Naive thymus-derived CD4-positive, alpha-beta T cell (primary cell): ENCODE measurements at regions of chr5 and their contacts with region 1.

Region 1: GRCh38 chr5:181223058-181223728 is at the start of gene TRIM41:
- DNase-seq: peak; percentile 89 to 98 (median 97)
- ATAC-seq: peak; percentile 81
- H3K4me3 ChIP-seq: peak within 1 kb of the TSS; percentile 90
- H3K4me3 Mint-ChIP-seq: peak within 1 kb of the TSS; percentile 89 to 100 (median 98)
- H3K27ac ChIP-seq: peak within 1 kb of the TSS; percentile 95
- H3K27ac Mint-ChIP-seq: peak within 1 kb of the TSS; percentile 98 to 100 (median 100)
- H3K4me1 ChIP-seq: peaks cover 20 to 22% of the 10 kb centered on the region in 2 donors
- H3K4me1 Mint-ChIP-seq: peaks cover 10 to 74% (median 53%) of the 10 kb centered on the region in 7 donors
- H3K27me3 ChIP-seq: no peaks in the 10 kb centered on the region
- H3K27me3 Mint-ChIP-seq: peaks cover 0 to 10% (median 0%) of the 10 kb centered on the region in 5 donors
- total RNA-seq, gene TRIM41: 27.3 to 36.5 (median 32.6) TPM

Region 2: GRCh38 chr5:179821581-179822432 is 1401.4 kb before region 1 on chr5:
- CTCF ChIA-PET with region 1: no interaction called
- POLR2A ChIA-PET with region 1: no interaction called
- intact Hi-C with region 1: loop called in 1 of 2 experiments (anchors 2 kb)
- DNase-seq: peak; percentile 72 to 88 (median 85)
- ATAC-seq: peak; percentile 73
- H3K4me3 ChIP-seq: peak overlapping the region; percentile 87
- H3K4me3 Mint-ChIP-seq: peak overlapping the region; percentile 88 to 98 (median 95)
- H3K27ac ChIP-seq: peak overlapping the region; percentile 96
- H3K27ac Mint-ChIP-seq: peak overlapping the region; percentile 79 to 97 (median 94)
- H3K4me1 ChIP-seq: peaks cover 31 to 36% of the 10 kb centered on the region in 2 donors
- H3K4me1 Mint-ChIP-seq: peaks cover 30 to 62% (median 45%) of the 10 kb centered on the region in 7 donors
- H3K27me3 ChIP-seq: no peaks in the 10 kb centered on the region
- H3K27me3 Mint-ChIP-seq: no peaks in the 10 kb centered on the region

Region 3: GRCh38 chr5:180860887-180861822 is 362.0 kb before region 1 on chr5 and contains the start of gene ZFP62:
- CTCF ChIA-PET with region 1: no interaction called
- POLR2A ChIA-PET with region 1: no interaction called
- intact Hi-C with region 1: loop called (anchors 1 to 10 kb)
- DNase-seq: peak; percentile 66 to 90 (median 82)
- ATAC-seq: peak; percentile 92
- H3K4me3 ChIP-seq: peak within 1 kb of the TSS; percentile 100
- H3K4me3 Mint-ChIP-seq: peak within 1 kb of the TSS; percentile 88 to 96 (median 91)
- H3K27ac ChIP-seq: peak within 1 kb of the TSS; percentile 83
- H3K27ac Mint-ChIP-seq: peak within 1 kb of the TSS; percentile 82 to 96 (median 94)
- H3K4me1 ChIP-seq: peaks cover 8 to 9% of the 10 kb centered on the region in 2 donors
- H3K4me1 Mint-ChIP-seq: peaks cover 19 to 32% (median 24%) of the 10 kb centered on the region in 7 donors
- H3K27me3 ChIP-seq: no peaks in the 10 kb centered on the region
- H3K27me3 Mint-ChIP-seq: peaks cover 0 to 10% (median 0%) of the 10 kb centered on the region in 5 donors
- total RNA-seq, gene ZFP62: 25.9 to 80.4 (median 36.4) TPM

Region 4: GRCh38 chr5:181181650-181182565 is 41.3 kb before region 1 on chr5:
- CTCF ChIA-PET with region 1: interaction called, 9 read pairs
- POLR2A ChIA-PET with region 1: interaction called, 46 read pairs
- intact Hi-C with region 1: loop called in 1 of 2 experiments (anchors 1 kb)
- DNase-seq: peak in 7 of 9 donors; percentile 38 to 72 (median 68)
- ATAC-seq: peak; percentile 81
- H3K4me3 ChIP-seq: no peak overlapping the region
- H3K4me3 Mint-ChIP-seq: peak overlapping the region; percentile 11 to 95 (median 50)
- H3K27ac ChIP-seq: no peak overlapping the region
- H3K27ac Mint-ChIP-seq: peak overlapping the region in 8 of 9 donors; percentile 2 to 92 (median 87)
- H3K4me1 ChIP-seq: peaks cover 3 to 8% of the 10 kb centered on the region in 2 donors
- H3K4me1 Mint-ChIP-seq: peaks cover 6 to 44% (median 31%) of the 10 kb centered on the region in 7 donors
- H3K27me3 ChIP-seq: no peaks in the 10 kb centered on the region
- H3K27me3 Mint-ChIP-seq: peaks cover 0 to 17% (median 0%) of the 10 kb centered on the region in 5 donors

Region 5: DNA sequence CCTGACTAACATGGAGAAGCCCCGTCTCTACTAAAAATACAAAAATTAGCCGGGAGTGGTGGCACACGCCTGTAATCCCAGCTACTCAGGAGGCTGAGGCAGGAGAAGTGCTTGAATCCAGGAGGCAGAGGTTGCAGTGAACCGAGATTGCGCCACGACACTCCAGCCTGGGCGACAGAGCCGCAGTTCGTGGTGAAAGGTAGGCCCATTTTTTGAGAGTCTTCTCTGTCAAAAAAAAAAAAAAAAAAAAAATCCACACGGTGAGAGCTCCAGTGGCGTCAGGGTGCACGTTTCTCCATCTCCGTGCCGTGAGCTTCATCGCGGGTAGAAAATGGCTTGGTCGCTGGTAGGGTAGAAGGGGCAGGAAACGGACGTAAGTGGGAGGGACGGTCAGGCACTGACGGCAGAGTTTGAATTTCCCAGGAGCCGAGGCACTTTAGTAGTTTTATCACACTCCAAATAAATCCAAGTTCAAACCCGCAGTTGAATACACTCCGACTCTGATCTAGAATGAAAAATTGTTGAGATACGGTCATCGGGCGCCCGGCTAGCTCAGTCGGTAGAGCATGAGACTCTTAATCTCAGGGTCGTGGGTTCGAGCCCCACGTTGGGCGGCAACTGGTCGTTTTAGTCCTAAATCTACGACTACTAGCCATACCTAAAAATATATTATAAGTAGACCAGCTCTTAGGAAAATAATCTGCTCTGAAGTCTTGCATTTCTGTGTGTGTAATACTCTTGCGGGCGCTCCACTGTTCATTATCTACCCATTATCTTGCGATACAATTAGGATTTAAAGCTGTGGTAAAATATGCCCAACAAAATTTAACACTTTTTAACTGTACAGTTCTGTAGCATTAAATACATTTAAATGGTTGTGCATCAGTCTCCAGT is 15.7 kb before region 1 on chr5:
- CTCF ChIA-PET with region 1: interaction called, 7 read pairs
- POLR2A ChIA-PET with region 1: interaction called, 93 read pairs
- intact Hi-C with region 1: loop called (anchors 1 kb)
- DNase-seq: peak; percentile 38 to 87 (median 78)
- ATAC-seq: peak; percentile 70
- H3K4me3 ChIP-seq: peak overlapping the region; percentile 67
- H3K4me3 Mint-ChIP-seq: peak overlapping the region; percentile 88 to 99 (median 94)
- H3K27ac ChIP-seq: peak overlapping the region; percentile 73
- H3K27ac Mint-ChIP-seq: peak overlapping the region; percentile 90 to 100 (median 98)
- H3K4me1 ChIP-seq: peaks cover 5 to 11% of the 10 kb centered on the region in 2 donors
- H3K4me1 Mint-ChIP-seq: peaks cover 21 to 45% (median 37%) of the 10 kb centered on the region in 7 donors
- H3K27me3 ChIP-seq: peaks cover 0 to 4% of the 10 kb centered on the region in 2 donors
- H3K27me3 Mint-ChIP-seq: peaks cover 0 to 36% (median 11%) of the 10 kb centered on the region in 5 donors

Region 6: DNA sequence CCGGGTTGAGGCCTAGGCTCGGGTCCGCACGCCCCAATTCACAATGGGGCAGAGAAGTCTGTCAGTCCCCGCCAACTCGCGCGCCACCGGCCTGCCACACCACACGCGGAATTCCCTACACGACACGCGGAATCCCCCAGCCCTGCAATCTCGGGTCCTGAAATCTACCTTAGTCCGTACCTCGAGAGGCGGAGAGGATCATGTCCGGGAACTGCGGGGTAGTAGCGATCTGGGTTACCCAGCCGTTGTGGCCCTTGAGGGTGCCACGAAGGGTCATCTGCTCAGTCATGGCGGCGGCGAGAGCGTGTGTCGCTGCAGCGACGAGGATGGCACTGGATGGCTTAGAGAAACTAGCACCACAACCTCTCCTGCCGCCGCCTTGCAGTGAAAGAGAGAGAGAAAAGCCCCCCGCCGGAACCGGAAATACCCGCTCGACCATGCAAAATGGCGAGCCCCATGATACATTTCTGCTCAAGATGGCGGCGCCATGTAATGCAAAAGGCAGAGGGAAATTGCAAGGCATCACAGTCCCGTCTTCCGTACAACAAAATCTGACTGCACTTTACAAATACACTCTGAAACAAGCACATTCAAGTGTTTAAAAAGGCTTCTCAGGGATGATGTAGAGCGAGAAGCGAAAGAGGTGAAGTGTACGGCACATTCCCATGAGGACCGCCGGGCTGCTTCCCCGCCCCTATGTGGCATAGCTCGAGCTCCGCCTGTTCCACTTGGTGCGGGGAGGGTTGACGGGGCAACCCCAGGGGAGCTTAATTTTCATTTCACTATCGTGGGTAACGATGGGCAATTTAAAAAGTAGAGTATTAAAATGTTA is 20.5 kb after region 1 on chr5 and contains the start of gene RACK1:
- CTCF ChIA-PET with region 1: interaction called, 9 read pairs
- POLR2A ChIA-PET with region 1: interaction called, 241 read pairs
- intact Hi-C with region 1: loop called (anchors 1 kb)
- DNase-seq: peak; percentile 77 to 93 (median 91)
- ATAC-seq: peak; percentile 83
- H3K4me3 ChIP-seq: peak within 1 kb of the TSS; percentile 99
- H3K4me3 Mint-ChIP-seq: peak within 1 kb of the TSS; percentile 91 to 99 (median 98)
- H3K27ac ChIP-seq: peak within 1 kb of the TSS; percentile 91
- H3K27ac Mint-ChIP-seq: peak within 1 kb of the TSS; percentile 93 to 100 (median 97)
- H3K4me1 ChIP-seq: peaks cover 39 to 46% of the 10 kb centered on the region in 2 donors
- H3K4me1 Mint-ChIP-seq: peaks cover 45 to 78% (median 66%) of the 10 kb centered on the region in 7 donors
- H3K27me3 ChIP-seq: no peaks in the 10 kb centered on the region
- H3K27me3 Mint-ChIP-seq: no peaks in the 10 kb centered on the region
- total RNA-seq, gene RACK1: 1,703 to 2,739 (median 2,322) TPM